A549 (cell line): ENCODE measurements at regions of chr11 and their contacts with region 1.

Region 1: DNA sequence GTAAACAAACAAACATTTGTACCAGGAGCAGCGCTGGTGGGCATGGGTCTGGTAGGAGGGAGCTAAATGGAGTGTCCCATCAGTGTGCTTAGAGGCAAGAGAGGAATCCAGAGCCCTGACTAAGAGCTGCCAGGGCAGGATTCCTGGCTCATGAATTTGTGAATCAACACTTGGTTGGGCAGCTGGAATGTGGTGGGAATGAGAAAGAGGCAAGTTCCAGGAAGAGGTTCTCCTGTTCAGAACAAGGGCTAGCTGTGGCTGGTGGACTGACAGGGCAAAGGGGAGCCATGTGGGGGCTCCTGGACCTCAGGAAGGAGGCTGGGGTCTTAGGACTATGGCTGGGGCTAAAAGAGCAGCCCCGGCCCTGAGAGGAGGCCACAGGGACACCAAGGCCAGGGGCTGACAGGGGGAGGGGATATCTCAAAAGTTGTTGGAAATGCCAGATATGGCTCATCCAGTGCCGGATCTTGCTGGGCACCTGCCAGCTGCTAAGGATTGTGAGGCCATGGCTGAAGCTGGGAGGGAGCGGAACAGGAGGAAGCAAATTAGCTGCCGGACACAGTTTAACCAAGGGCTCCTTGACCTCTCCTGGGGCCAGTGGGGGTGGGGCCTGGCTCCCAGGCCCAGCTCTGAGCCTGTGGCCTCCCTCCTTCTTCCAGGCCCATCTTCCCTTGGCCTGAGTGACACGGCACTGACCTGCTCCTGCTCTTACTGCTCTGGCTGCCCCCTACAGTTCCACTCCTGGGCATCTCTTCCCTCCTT is 14.6 kb upstream of the P2RY6 start:
- DNase-seq: peak in 1 of 2 experiments; percentile 77
- ATAC-seq: peak; percentile 66 to 90
- H3K4me3 ChIP-seq: no peak overlapping the region
- H3K27ac ChIP-seq: peak overlapping the region; percentile 51 to 85
- H3K4me1 ChIP-seq: peaks cover 17% of the 10 kb centered on the region
- CTCF ChIP-seq: no peak
- EP300 ChIP-seq: no peak
- POLR2A ChIP-seq: no peak
- RAD21 ChIP-seq: no peak

Region 2: DNA sequence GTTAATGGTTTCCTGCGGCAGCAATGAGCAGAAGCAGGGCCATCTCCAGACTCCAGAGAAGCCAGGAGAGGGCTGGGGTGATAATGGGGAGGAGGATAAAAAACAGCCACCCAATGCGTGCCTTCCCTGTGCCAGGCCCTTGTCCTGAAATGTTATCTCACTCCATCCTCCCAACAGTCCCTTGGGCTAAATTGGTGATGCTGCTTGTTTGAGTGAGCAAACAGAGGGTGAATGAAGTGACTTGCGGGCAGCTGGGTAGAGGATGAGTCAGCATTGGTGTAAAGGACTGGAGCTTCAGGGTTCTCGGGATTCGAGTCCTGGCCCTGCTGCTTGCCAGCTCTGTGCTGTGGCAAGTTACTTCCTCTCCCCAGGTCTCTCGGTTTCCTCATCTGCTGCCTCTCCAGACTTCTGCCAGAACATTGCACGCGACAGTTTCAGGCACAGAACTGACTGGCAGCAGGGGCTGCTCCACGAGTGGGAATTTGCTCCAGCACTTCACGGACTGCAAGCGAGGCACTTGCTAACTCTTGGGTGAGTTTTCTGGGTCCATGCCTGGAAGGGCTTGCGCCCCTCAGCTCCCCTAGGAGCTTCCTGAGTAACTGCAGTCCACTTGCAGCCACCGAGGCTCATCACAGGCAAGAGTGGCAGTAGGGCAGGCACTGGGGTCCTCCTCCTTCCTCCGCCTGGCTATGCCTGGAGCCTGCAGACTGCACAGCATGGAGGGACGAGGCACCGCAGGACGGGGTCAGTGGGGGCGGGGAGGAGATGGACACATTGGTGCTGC is 14.6 kb after region 1 on chr11 and contains the start of gene P2RY6:
- CTCF ChIA-PET with region 1: interaction called, 22 read pairs
- POLR2A ChIA-PET with region 1: interaction called, 3 read pairs
- DNase-seq: peak; percentile 93 to 97
- ATAC-seq: peak; percentile 80 to 91
- H3K4me3 ChIP-seq: peak within 1 kb of the TSS; percentile 47
- H3K27ac ChIP-seq: peak within 1 kb of the TSS; percentile 88 to 91
- H3K4me1 ChIP-seq: peaks cover 47% of the 10 kb centered on the region
- CTCF ChIP-seq: no peak
- EP300 ChIP-seq: no peak
- POLR2A ChIP-seq: peak; percentile 30; the same call in 1 of the 2 replicates
- RAD21 ChIP-seq: no peak; a peak in 1 of 5 replicates
- polyA plus RNA-seq, gene P2RY6: 6.8 and 8.4 TPM in 2 replicates

Region 3: GRCh38 chr11:73463359-73463758 is 205.8 kb after region 1 on chr11:
- CTCF ChIA-PET with region 1: no interaction called
- POLR2A ChIA-PET with region 1: no interaction called
- DNase-seq: peak in 1 of 2 experiments; percentile 9
- ATAC-seq: 0 out of 6 replicates have a peak, but pooled peaks of 1 of the 2 experiments have one; percentile 40
- H3K4me3 ChIP-seq: no peak overlapping the region
- H3K27ac ChIP-seq: no peak overlapping the region
- H3K4me1 ChIP-seq: no peaks in the 10 kb centered on the region
- CTCF ChIP-seq: no peak
- EP300 ChIP-seq: no peak
- POLR2A ChIP-seq: no peak
- RAD21 ChIP-seq: no peak